ENCODE measurements at regions of chr11 and their contacts with region 1.

Region 1: DNA sequence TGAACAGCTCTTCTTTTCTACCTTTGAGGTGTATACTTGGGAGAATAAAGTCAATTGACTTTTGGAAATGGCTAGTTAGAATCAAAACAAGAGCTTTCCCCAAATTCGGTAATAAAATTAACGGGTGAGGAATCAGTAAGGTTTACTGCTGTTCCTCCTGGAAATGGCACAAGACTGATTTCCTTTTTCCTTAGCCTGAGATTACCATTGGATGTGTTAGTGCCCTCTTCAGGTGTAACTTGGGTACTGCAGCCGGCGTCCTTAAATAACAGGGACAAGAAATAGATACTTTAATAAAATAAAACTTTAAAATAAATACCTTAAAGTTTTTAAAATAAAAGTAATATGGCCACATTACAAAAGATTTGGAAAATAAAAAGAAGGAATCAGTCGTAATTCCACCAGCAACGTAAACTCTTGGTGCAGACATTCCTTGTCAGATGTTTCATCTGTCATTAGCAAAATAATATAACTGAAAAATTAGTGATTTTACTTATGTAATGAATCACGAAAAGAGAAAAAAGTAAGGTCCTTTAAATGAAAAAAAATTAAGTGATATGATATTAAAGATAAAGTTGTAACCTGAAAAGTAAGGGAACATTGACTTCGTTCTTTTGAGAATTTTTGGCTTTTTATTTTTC is 29.7 kb downstream of the ZFTA start:
- DNase-seq: peak; percentile 60
- ATAC-seq: no peak
- H3K4me3 ChIP-seq: no peak overlapping the region
- H3K27ac ChIP-seq: no peak overlapping the region
- H3K4me1 ChIP-seq: no peaks in the 10 kb centered on the region
- H3K27me3 ChIP-seq: no peaks in the 10 kb centered on the region
- CTCF ChIP-seq: peak; percentile 89

Region 2: DNA sequence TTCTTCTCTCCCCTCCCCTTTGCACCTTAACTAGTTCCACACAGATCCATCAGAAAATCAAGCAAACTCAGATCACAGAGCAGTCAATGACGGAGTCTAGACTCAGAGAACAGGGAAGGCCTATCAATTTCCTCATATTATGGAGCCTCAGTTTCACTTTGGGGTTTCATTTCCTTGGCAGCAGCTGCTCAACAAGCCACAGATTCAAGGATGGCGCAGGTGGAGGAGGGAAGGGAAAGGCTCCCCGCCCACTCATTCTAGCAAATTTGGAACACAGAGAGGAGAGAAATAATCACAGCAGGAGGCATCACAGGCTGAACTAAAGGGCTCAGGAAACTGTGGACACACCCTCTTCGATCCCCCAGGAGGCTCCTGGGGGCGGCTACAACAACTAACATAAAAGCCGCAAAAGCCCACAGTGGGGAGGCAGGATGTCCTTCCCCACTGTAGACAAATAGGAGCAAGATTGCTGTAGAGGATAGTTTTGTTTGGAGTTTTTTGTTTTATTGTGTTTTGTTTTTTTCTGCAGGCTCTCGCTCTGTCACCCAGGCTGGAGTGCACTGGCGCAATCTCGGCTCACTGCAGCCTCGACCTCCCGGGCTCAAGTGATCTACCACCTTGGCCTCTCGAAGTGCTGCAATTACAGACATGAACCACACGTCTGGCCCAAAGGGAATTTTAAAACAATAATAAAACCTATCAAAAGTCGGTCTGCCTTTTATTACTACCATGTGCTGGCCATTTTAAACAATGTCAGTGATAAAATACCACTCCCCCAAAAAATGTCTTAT is 128.0 kb before region 1 on chr11:
- CTCF ChIA-PET with region 1: interaction called, 10 read pairs
- POLR2A ChIA-PET with region 1: no interaction called
- in situ Hi-C with region 1: no loop called
- intact Hi-C with region 1: no loop called
- DNase-seq: no peak
- ATAC-seq: no peak
- H3K4me3 ChIP-seq: peak overlapping the region in 1 of 2 experiments; percentile 17; a peak in 1 of 4 replicates
- H3K27ac ChIP-seq: no peak overlapping the region; the same call in 1 of the 2 replicates
- H3K4me1 ChIP-seq: peaks cover 30% of the 10 kb centered on the region
- H3K27me3 ChIP-seq: no peaks in the 10 kb centered on the region
- CTCF ChIP-seq: no peak

Region 3: GRCh38 chr11:63623513-63624140 is 115.2 kb before region 1 on chr11:
- CTCF ChIA-PET with region 1: no interaction called
- POLR2A ChIA-PET with region 1: no interaction called
- in situ Hi-C with region 1: no loop called
- intact Hi-C with region 1: no loop called
- DNase-seq: no peak
- ATAC-seq: peak; percentile 52
- H3K4me3 ChIP-seq: no peak overlapping the region
- H3K27ac ChIP-seq: no peak overlapping the region
- H3K4me1 ChIP-seq: no peaks in the 10 kb centered on the region
- H3K27me3 ChIP-seq: no peaks in the 10 kb centered on the region
- CTCF ChIP-seq: no peak

Region 4: GRCh38 chr11:63888170-63889086 is 149.6 kb after region 1 on chr11:
- CTCF ChIA-PET with region 1: no interaction called
- POLR2A ChIA-PET with region 1: no interaction called
- in situ Hi-C with region 1: no loop called
- intact Hi-C with region 1: no loop called
- DNase-seq: no peak
- ATAC-seq: peak; percentile 43
- H3K4me3 ChIP-seq: peak overlapping the region; percentile 18 to 46
- H3K27ac ChIP-seq: peak overlapping the region; percentile 74
- H3K4me1 ChIP-seq: peaks cover 20% of the 10 kb centered on the region
- H3K27me3 ChIP-seq: no peaks in the 10 kb centered on the region
- CTCF ChIP-seq: no peak